ENCODE measurements at regions of chr17 and their contacts with region 1.

Region 1: GRCh38 chr17:81419328-81419885 is 24.1 kb downstream of the BAHCC1 start:
- DNase-seq: peak; percentile 95
- H3K4me3 ChIP-seq: peak overlapping the region; percentile 28
- H3K27ac ChIP-seq: peak overlapping the region; percentile 78 to 100
- H3K4me1 ChIP-seq: peaks cover 62 to 71% of the 10 kb centered on the region in 2 experiments; a peak in 3 of 4 replicates
- H3K27me3 ChIP-seq: no peaks in the 10 kb centered on the region
- CTCF ChIP-seq: no peak
- EP300 ChIP-seq: no peak; a peak in 1 of 4 replicates
- RAD21 ChIP-seq: no peak

Region 2: DNA sequence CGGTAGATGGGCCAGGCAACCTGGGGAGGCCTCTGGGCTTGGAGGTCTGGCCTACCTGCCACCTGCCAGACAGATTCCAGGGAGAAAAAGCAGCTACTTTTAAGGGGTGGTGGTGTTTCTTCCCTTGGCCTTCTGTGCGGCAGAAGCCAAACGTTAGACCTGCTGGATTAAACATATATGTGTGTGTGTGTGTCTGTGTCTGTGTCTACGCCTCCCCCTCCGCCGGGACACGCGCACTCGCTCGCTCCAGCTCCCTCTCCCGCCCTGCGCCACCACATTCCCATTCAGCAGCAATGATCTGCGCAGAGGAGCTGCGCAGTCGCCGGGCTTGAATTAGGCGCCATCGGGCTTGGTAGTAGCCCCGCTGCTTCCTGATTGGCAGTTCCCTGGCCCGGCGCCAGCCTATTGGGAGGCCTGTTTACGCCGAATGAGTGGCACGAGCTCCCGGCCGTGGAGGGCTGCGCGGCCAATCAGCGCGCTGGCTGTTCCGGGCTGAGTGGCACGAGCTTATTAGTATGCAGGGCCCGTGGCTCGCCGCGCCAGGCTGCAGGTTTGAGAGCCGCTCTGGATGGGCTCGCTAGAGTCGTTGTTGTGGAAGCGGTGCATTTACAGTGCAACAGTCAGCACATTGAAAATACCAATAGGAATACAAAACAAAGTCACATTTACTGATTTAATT is 24.3 kb before region 1 on chr17 and contains the start of gene BAHCC1:
- CTCF ChIA-PET with region 1: interaction called, 14 read pairs
- POLR2A ChIA-PET with region 1: interaction called, 9 read pairs
- DNase-seq: peak; percentile 97
- H3K4me3 ChIP-seq: peak within 1 kb of the TSS; percentile 60 to 80
- H3K27ac ChIP-seq: peak within 1 kb of the TSS; percentile 83 to 89
- H3K4me1 ChIP-seq: peaks cover 31 to 68% of the 10 kb centered on the region in 2 experiments
- H3K27me3 ChIP-seq: no peaks in the 10 kb centered on the region
- CTCF ChIP-seq: no peak
- EP300 ChIP-seq: peak in 1 of 2 experiments; percentile 51; a peak in 1 of 4 replicates
- RAD21 ChIP-seq: no peak; the same call in 1 of the 2 replicates
- polyA plus RNA-seq, gene BAHCC1: 3.6 and 6.4 TPM in 2 replicates

Measured in SK-N-SH (cell line).